ENCODE measurements at regions of chr1 and their contacts with region 1.

Region 1: DNA sequence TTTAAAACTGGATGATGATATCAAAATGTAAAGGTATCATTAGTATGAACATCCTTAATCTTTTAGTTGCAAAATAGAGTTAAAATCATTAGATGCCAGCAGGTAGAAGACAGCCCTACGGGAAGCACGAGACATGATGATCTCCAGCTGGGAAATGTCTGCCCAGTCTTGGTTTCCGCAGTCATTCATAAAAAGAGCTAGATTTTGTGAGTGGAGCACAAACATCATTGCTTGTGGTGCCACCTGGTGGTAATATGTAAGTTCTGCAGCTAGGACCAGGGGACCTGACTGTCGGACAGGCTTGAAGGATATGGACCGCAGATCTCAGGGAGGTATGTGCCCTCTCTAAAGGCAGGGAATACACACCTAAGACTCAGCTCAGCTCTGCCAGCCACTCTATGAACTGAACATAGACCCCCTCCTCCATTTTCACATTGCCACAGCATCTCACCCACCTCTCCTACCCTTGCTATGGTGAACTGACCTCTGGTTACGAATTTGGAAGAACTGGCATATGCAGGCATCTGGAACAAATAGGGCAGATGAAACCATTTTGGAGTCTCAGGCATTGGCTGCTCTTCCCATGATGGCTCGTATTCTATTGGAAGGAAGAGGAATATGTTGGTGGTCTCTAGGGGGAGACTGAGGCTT is 9.2 kb downstream of the FCMR start:
- DNase-seq: peak; percentile 96
- H3K4me3 Mint-ChIP-seq: no peak overlapping the region
- H3K27ac Mint-ChIP-seq: no peak overlapping the region
- H3K4me1 Mint-ChIP-seq: peaks cover 28% of the 10 kb centered on the region
- H3K27me3 Mint-ChIP-seq: peaks cover 43% of the 10 kb centered on the region
- CTCF ChIP-seq: peak; percentile 94

Region 2: GRCh38 chr1:206693029-206693428 is 219.5 kb before region 1 on chr1:
- CTCF ChIA-PET with region 1: interaction called, 15 read pairs
- POLR2A ChIA-PET with region 1: interaction called, 3 read pairs
- intact Hi-C with region 1: no loop called
- DNase-seq: no peak
- H3K4me3 Mint-ChIP-seq: no peak overlapping the region
- H3K27ac Mint-ChIP-seq: no peak overlapping the region
- H3K4me1 Mint-ChIP-seq: peaks cover 56% of the 10 kb centered on the region
- H3K27me3 Mint-ChIP-seq: no peaks in the 10 kb centered on the region
- CTCF ChIP-seq: no peak

Region 3: GRCh38 chr1:206797534-206798383 is 114.8 kb before region 1 on chr1:
- CTCF ChIA-PET with region 1: interaction called, 243 read pairs
- POLR2A ChIA-PET with region 1: no interaction called
- intact Hi-C with region 1: no loop called
- DNase-seq: peak; percentile 50
- H3K4me3 Mint-ChIP-seq: no peak overlapping the region
- H3K27ac Mint-ChIP-seq: no peak overlapping the region
- H3K4me1 Mint-ChIP-seq: no peaks in the 10 kb centered on the region
- H3K27me3 Mint-ChIP-seq: no peaks in the 10 kb centered on the region
- CTCF ChIP-seq: peak; percentile 68

Region 4: GRCh38 chr1:206865013-206865671 is 47.4 kb before region 1 on chr1 and contains the start of gene IL20:
- CTCF ChIA-PET with region 1: interaction called, 89 read pairs
- POLR2A ChIA-PET with region 1: interaction called, 38 read pairs
- intact Hi-C with region 1: loop called (anchors 1 kb)
- DNase-seq: peak; percentile 100
- H3K4me3 Mint-ChIP-seq: no peak within 1 kb of the TSS
- H3K27ac Mint-ChIP-seq: no peak within 1 kb of the TSS
- H3K4me1 Mint-ChIP-seq: peaks cover 32% of the 10 kb centered on the region
- H3K27me3 Mint-ChIP-seq: peaks cover 17% of the 10 kb centered on the region
- CTCF ChIP-seq: peak; percentile 100
- total RNA-seq, gene IL20: not detected in 2 replicates

Region 5: DNA sequence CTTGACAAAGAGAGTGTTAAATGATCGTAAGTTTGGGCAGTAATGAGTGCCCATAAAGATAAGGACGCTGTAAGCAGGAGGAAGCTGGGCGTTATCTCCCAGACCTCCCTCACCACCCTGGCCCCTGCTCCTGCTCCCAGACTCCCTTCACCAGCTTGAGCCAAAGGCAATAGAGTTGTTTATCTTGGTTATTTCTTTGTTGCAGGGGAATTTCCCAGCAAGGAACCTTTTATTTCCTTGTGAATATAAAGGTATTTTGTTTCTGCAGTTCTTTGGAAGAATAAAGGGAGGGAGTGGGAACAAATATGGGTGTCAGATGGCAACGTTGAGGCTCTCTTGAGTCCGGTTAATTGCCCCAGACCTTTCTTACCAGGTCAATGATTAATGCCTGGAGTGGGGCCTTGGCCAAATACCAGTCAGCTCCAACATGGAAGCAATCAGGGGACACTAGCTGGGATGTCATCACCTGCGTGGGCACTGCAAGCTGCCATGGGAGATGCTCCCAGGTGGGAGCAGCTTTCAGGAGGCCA is 29.4 kb after region 1 on chr1:
- CTCF ChIA-PET with region 1: interaction called, 13 read pairs
- POLR2A ChIA-PET with region 1: no interaction called
- intact Hi-C with region 1: no loop called
- DNase-seq: no peak
- H3K4me3 Mint-ChIP-seq: no peak overlapping the region
- H3K27ac Mint-ChIP-seq: no peak overlapping the region
- H3K4me1 Mint-ChIP-seq: peaks cover 8% of the 10 kb centered on the region
- H3K27me3 Mint-ChIP-seq: peaks cover 39% of the 10 kb centered on the region
- CTCF ChIP-seq: no peak

Region 6: GRCh38 chr1:207032528-207033017 is 120.0 kb after region 1 on chr1 and contains the start of gene C1orf116:
- CTCF ChIA-PET with region 1: interaction called, 10 read pairs
- POLR2A ChIA-PET with region 1: interaction called, 11 read pairs
- intact Hi-C with region 1: no loop called
- DNase-seq: peak; percentile 98
- H3K4me3 Mint-ChIP-seq: peak within 1 kb of the TSS; percentile 75
- H3K27ac Mint-ChIP-seq: peak within 1 kb of the TSS; percentile 86
- H3K4me1 Mint-ChIP-seq: peaks cover 79% of the 10 kb centered on the region
- H3K27me3 Mint-ChIP-seq: no peaks in the 10 kb centered on the region
- CTCF ChIP-seq: no peak
- total RNA-seq, gene C1orf116: 35.4 and 35.5 TPM in 2 replicates

Region 7: DNA sequence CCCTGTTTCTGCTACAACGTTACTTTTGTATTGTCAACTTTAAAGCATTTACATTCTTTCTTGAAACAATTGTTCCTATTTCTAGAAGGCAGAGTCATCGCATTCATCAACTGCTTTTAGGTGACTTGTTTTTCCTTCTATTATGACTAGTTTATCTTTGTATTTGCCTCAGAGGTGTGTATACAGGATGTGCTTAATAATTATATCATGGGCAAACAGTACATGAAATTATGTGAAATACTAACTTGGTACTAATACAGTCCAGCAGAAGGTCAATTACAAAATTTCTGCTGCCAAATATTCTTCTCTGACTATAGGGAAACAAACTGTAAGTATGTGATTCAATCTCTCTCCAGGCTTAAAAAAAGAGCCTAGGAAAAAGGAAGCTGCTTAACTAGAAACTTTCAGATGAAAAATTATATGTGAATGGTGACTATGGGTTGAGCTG is 293.1 kb after region 1 on chr1:
- CTCF ChIA-PET with region 1: no interaction called
- POLR2A ChIA-PET with region 1: no interaction called
- intact Hi-C with region 1: no loop called
- DNase-seq: no peak
- H3K4me3 Mint-ChIP-seq: no peak overlapping the region
- H3K27ac Mint-ChIP-seq: peak overlapping the region; percentile 78
- H3K4me1 Mint-ChIP-seq: peaks cover 11% of the 10 kb centered on the region
- H3K27me3 Mint-ChIP-seq: no peaks in the 10 kb centered on the region
- CTCF ChIP-seq: no peak

Measured in MCF 10A (cell line).